IMR-90 (cell line): ENCODE measurements at regions of chr3 and their contacts with region 1.

Region 1: GRCh38 chr3:77320514-77320913 is 280.6 kb downstream of the ROBO2 start:
- DNase-seq: peak; percentile 67
- ATAC-seq: peak; percentile 68
- H3K4me3 ChIP-seq: no peak overlapping the region
- H3K27ac ChIP-seq: no peak overlapping the region
- H3K4me1 ChIP-seq: 0 out of 2 replicates have a peak, but pooled peaks cover 2% of the 10 kb centered on the region
- H3K27me3 ChIP-seq: no peaks in the 10 kb centered on the region
- CTCF ChIP-seq: peak; percentile 68
- POLR2A ChIP-seq: no peak
- RAD21 ChIP-seq: peak; percentile 44

Region 2: GRCh38 chr3:75814797-75815196 is 1505.7 kb before region 1 on chr3:
- CTCF ChIA-PET with region 1: no interaction called
- POLR2A ChIA-PET with region 1: no interaction called
- dilution Hi-C with region 1: no loop called
- in situ Hi-C with region 1: no loop called
- intact Hi-C with region 1: loop called (anchors 5 kb)
- DNase-seq: no peak
- ATAC-seq: no peak
- H3K4me3 ChIP-seq: no peak overlapping the region
- H3K27ac ChIP-seq: no peak overlapping the region
- H3K4me1 ChIP-seq: peaks cover 5% of the 10 kb centered on the region
- H3K27me3 ChIP-seq: no peaks in the 10 kb centered on the region
- CTCF ChIP-seq: no peak
- POLR2A ChIP-seq: no peak
- RAD21 ChIP-seq: no peak

Region 3: GRCh38 chr3:77254967-77255831 is 65.3 kb before region 1 on chr3:
- CTCF ChIA-PET with region 1: no interaction called
- POLR2A ChIA-PET with region 1: no interaction called
- dilution Hi-C with region 1: no loop called
- in situ Hi-C with region 1: no loop called
- intact Hi-C with region 1: loop called (anchors 5 kb)
- DNase-seq: peak; percentile 69
- ATAC-seq: peak; percentile 88
- H3K4me3 ChIP-seq: no peak overlapping the region
- H3K27ac ChIP-seq: no peak overlapping the region
- H3K4me1 ChIP-seq: no peaks in the 10 kb centered on the region
- H3K27me3 ChIP-seq: no peaks in the 10 kb centered on the region; the same call in 1 of the 2 replicates
- CTCF ChIP-seq: peak; percentile 74
- POLR2A ChIP-seq: no peak
- RAD21 ChIP-seq: peak; percentile 65

Region 4: GRCh38 chr3:78645628-78646310 is 1325.3 kb after region 1 on chr3:
- CTCF ChIA-PET with region 1: no interaction called
- POLR2A ChIA-PET with region 1: no interaction called
- dilution Hi-C with region 1: no loop called
- in situ Hi-C with region 1: no loop called
- intact Hi-C with region 1: loop called (anchors 10 kb)
- DNase-seq: peak; percentile 81
- ATAC-seq: peak; percentile 84
- H3K4me3 ChIP-seq: no peak overlapping the region
- H3K27ac ChIP-seq: no peak overlapping the region
- H3K4me1 ChIP-seq: peaks cover 2% of the 10 kb centered on the region; the same call in 1 of the 2 replicates
- H3K27me3 ChIP-seq: no peaks in the 10 kb centered on the region
- CTCF ChIP-seq: peak; percentile 88
- POLR2A ChIP-seq: no peak
- RAD21 ChIP-seq: peak; percentile 93

Region 5: GRCh38 chr3:79032686-79033318 is 1712.3 kb after region 1 on chr3:
- CTCF ChIA-PET with region 1: interaction called, 4 read pairs
- POLR2A ChIA-PET with region 1: no interaction called
- dilution Hi-C with region 1: no loop called
- in situ Hi-C with region 1: loop called (anchors 25 kb)
- intact Hi-C with region 1: no loop called
- DNase-seq: peak; percentile 67
- ATAC-seq: peak; percentile 52; the same call in 1 of the 2 replicates
- H3K4me3 ChIP-seq: no peak overlapping the region
- H3K27ac ChIP-seq: no peak overlapping the region
- H3K4me1 ChIP-seq: peaks cover 2% of the 10 kb centered on the region; the same call in 1 of the 2 replicates
- H3K27me3 ChIP-seq: no peaks in the 10 kb centered on the region
- CTCF ChIP-seq: peak; percentile 69
- POLR2A ChIP-seq: no peak
- RAD21 ChIP-seq: peak; percentile 79